ENCODE measurements at regions of chr1 and their contacts with region 1.

Region 1: DNA sequence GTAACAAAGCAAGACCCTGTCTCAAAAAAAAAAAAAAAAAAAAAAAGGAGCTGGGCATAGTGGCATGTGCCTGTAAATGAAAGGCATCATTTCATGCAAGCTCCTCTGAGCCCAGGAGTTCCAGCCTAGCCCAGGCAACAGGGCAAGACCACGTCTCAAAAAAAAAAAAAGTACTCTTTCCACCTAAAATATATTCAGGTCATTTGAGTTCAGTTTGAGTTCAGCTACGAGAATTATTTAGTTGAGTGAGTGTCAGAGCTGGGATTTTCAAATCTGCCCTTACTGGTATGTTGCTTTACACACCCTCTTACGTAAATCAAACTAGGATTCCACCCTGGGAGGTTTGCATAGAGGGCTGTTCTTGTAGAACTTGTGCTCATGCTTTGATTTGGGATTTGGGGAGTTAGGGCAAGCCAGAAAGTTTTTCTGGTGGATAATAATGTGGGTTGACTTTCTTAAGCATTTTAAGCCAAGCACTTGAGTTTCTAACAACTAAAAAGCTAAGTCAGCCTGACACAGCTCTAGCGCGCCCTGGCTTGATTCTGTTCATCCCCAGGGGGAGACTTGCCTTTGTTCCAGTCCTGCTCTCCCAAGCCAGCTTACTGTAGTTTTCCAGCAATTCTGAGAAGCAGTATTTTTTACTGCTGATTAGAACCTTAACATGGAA is 11.3 kb upstream of the PGD start:
- DNase-seq: peak; percentile 65
- H3K4me3 ChIP-seq: peak overlapping the region; percentile 13; the same call in 1 of the 2 replicates
- CTCF ChIP-seq: peak; percentile 17

Region 2: DNA sequence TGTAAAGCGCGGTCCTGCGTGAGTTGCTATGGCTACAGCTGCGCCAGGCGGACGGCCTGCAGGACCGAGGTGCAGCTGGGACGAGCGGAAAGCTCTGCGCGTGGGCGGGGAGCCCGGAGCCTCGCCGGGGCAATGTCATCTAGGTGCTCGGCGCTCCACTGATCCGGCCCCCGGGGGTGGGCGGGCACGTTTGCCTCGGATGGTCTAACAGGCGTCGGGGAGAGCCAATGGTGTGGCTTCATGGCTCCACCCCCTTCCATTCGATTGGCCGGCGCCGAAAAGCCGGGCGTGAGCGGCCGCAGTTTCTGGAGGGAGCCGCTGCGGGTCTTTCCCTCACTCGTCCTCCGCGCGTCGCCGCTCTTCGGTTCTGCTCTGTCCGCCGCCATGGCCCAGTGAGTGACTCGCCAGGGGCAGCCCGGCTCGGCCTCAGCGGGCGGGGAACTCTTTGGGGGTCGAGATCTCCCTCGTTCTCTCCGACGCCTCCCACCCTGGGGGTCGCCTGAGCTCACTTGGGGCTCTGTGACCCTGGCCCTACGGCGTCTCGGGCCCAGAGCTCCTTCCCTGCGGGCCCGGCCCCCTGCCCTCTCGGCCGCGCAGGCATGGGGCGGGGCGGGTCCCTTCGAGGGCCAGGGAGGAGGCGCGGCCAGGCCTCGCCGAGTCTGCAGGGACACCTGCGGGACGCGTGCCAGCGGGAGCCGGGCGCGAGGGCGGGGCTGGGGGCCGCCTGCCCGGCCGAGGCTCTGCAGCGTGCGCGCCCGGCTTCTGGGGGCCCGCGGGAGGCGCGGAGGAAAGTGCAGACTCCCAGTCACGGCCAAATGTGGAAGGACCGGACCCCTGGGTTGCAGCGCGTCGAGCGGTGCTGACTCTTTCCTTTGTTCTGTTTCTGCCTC is 11.4 kb after region 1 on chr1 and contains the start of gene PGD:
- CTCF ChIA-PET with region 1: interaction called, 24 read pairs
- POLR2A ChIA-PET with region 1: interaction called, 23 read pairs
- DNase-seq: peak; percentile 85
- H3K4me3 ChIP-seq: peak within 1 kb of the TSS; percentile 90
- CTCF ChIP-seq: peak; percentile 2